Lower leg skin (tissue), 4 donors: ENCODE measurements at regions of chr9 and their contacts with region 1.

Region 1: GRCh38 chr9:88184976-88185375 is 46.7 kb upstream of the SPATA31C2 start:
- DNase-seq: no peak
- H3K4me3 ChIP-seq: no peak overlapping the region
- CTCF ChIP-seq: no peak
- POLR2A ChIP-seq: no peak

Region 2: GRCh38 chr9:86511614-86512360 is 1673.2 kb before region 1 on chr9:
- intact Hi-C with region 1: loop called (anchors 5 kb)
- DNase-seq: no peak
- H3K4me3 ChIP-seq: no peak overlapping the region
- CTCF ChIP-seq: no peak
- POLR2A ChIP-seq: no peak